ENCODE measurements at regions of chr19 and their contacts with region 1.

Region 1: GRCh38 chr19:11924886-11925650 is at the start of gene ZNF700:
- DNase-seq: peak; percentile 79
- H3K4me3 ChIP-seq: peak within 1 kb of the TSS; percentile 78 to 98 (median 94)
- H3K27ac ChIP-seq: peak within 1 kb of the TSS; percentile 94 to 99 (median 96)
- H3K4me1 ChIP-seq: peaks cover 10 to 47% (median 15%) of the 10 kb centered on the region in 3 donors
- H3K27me3 ChIP-seq: no peaks in the 10 kb centered on the region
- CTCF ChIP-seq: no peak
- POLR2A ChIP-seq: peak in 3 of 4 donors; percentile 50 to 76 (median 75)
- total RNA-seq, gene ZNF700: 6.4 to 13.9 (median 9.9) TPM

Region 2: DNA sequence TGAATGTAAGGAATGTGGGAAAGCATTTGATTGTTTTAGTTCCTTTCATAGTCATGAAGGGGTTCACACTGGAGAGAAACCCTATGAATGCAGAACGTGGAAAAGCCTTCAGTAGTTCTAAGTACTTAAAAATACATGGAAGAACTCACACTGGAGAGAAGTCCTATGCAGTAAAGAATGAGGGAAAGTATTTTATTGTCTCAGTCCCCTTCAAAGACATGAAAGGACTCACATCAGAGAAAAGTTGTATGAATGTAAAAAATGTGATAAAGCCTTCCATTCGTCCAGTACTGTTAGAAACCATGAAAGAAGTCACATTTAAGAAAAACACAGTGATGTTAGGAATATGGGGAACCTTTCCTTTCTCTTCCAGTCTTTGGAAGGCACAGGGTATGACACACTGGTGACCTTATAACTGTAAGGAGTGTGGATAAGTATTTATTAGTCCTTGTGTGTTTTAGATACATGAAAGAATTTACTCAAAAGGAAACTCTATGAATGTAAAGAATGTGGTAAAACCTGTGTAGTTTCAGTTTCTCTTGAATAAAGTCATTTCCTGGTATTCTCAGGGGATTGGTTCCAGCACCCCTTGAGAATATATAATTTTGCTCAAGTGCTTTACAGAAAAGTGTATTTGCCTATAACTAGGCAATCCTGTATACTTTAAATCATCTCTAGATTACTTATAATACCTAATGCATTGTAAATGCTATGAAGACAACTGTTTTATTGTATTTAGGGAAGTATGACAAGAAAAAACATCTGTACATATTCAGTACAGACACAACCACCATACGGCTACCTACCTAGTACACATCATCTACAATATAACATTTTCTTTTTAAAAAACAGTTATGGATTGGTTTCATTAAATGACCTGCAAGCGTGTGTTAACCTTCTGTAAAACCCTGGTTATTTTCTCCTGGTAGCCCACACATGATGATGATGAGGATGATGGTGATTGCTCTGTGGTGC is 239.1 kb before region 1 on chr19:
- intact Hi-C with region 1: no loop called
- DNase-seq: no peak
- H3K4me3 ChIP-seq: no peak overlapping the region
- H3K27ac ChIP-seq: no peak overlapping the region
- H3K4me1 ChIP-seq: no peaks in the 10 kb centered on the region
- H3K27me3 ChIP-seq: no peaks in the 10 kb centered on the region
- CTCF ChIP-seq: no peak
- POLR2A ChIP-seq: no peak

Region 3: GRCh38 chr19:11887611-11888531 is 37.2 kb before region 1 on chr19 and contains the start of gene ZNF69:
- intact Hi-C with region 1: no loop called
- DNase-seq: no peak
- H3K4me3 ChIP-seq: peak within 1 kb of the TSS; percentile 38 to 78 (median 70)
- H3K27ac ChIP-seq: peak within 1 kb of the TSS; percentile 61 to 88 (median 86)
- H3K4me1 ChIP-seq: peaks cover 0 to 22% (median 6%) of the 10 kb centered on the region in 3 donors
- H3K27me3 ChIP-seq: no peaks in the 10 kb centered on the region
- CTCF ChIP-seq: peak in 2 of 6 experiments; percentile 7 to 17
- POLR2A ChIP-seq: no peak
- total RNA-seq, gene ZNF69: 0.18 to 4.4 (median 1.2) TPM

Region 4: GRCh38 chr19:11987405-11988281 is 62.6 kb after region 1 on chr19:
- intact Hi-C with region 1: loop called (anchors 5 kb)
- DNase-seq: peak; percentile 79
- H3K4me3 ChIP-seq: peak overlapping the region; percentile 68 to 95 (median 84)
- H3K27ac ChIP-seq: peak overlapping the region; percentile 79 to 93 (median 90)
- H3K4me1 ChIP-seq: peaks cover 0 to 26% (median 0%) of the 10 kb centered on the region in 3 donors
- H3K27me3 ChIP-seq: no peaks in the 10 kb centered on the region
- CTCF ChIP-seq: peak in 2 of 6 experiments; percentile 2 to 19
- POLR2A ChIP-seq: peak in 2 of 4 donors; percentile 71 to 82

Measured in esophagus squamous epithelium (tissue), 5 donors.